Activated CD4-positive, alpha-beta memory T cell treated with anti-CD3 and anti-CD28 coated beads for 36 hours (primary cell): ENCODE measurements at regions of chr2 and their contacts with region 1.

Region 1: DNA sequence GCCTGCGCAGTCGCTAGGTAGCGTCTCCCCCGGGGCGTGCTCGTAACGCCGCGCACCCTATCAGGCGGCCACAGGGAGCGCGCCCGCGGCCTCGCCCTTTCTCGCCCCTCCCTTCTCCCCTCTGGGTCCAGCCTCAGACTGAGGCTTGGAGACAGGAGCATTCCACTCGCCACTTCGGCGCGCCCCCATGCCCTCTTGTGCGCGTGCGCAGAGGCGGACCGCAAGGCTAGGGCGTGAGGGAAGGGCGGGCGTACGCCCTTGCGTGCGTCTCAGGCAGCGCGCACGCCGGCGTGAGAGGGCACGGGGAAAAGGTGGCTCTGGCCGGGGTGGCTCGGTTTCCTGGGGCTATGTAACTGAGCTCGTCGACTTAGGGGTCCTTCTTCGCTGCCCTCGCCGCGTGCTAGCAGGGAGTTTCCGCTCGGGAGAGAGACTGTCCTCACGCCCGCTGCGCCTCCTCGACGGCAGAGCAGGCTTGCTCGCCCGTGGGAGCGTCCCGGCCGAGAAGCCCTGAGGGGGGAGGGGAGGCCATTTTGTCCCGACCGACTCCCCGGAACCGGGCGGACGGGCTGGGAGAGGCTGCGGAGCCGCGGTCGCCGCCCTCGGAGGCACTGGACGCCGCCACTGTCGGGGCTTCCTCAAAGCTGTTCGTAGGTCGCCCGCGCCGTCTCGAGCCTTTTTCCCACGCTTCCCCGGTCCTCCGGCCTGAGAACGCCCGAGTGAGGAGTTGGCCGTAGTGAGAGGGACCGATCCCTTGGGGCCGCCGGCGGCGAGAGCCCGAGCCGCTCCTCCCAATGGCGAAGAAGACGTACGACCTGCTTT is at the start of gene RAB10:
- DNase-seq: peak; percentile 100
- H3K4me3 Mint-ChIP-seq: peak within 1 kb of the TSS; percentile 96
- H3K27ac Mint-ChIP-seq: peak within 1 kb of the TSS; percentile 91
- H3K4me1 Mint-ChIP-seq: peaks cover 24% of the 10 kb centered on the region
- H3K27me3 Mint-ChIP-seq: no peaks in the 10 kb centered on the region
- total RNA-seq, gene RAB10: 110 to 119 TPM

Region 2: DNA sequence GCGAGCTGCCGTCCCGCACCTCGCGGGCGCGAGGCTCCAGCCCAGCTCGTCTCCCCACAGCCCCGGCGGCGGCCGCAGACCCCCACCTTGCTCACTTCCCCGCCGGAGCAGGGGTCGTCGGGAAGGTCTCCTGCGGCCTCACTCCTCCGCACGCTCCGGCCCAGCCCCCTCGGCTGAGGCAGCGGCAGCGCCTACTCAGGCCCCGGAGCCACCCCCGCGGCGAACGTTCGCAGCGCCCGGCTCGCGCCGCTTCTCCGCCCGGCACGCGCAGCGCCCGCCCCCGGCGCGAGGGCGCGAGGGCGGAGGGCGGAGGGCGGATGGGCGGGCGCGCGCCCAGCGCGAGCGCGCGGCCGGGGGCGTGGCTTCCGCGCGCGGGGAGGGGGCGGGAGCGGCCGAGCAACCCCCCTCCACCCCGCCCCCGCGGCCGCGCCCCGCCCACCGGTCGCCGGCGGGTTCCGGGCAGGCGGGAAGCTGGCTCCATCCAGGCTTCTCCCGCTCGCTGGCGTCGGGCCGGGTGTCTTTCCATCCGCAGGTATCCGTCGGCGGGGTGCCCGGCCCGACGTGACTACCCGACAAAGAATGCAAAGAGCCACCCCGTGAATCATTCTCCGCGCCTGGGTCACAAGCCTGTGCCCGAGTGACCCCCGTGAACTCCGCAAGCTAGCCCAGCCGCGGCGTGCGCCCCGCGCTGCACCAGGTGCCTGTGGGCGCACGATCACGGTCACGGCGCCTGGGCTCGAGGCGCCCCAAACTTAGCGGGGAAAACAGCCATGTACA is 360.5 kb before region 1 on chr2 and contains the start of gene DTNB:
- CTCF ChIA-PET with region 1: no interaction called
- POLR2A ChIA-PET with region 1: interaction called, 3 read pairs
- intact Hi-C with region 1: loop called (anchors 10 kb)
- DNase-seq: peak; percentile 85
- H3K4me3 Mint-ChIP-seq: peak within 1 kb of the TSS; percentile 80
- H3K27ac Mint-ChIP-seq: peak within 1 kb of the TSS; percentile 62
- H3K4me1 Mint-ChIP-seq: peaks cover 27% of the 10 kb centered on the region
- H3K27me3 Mint-ChIP-seq: no peaks in the 10 kb centered on the region
- total RNA-seq, gene DTNB: 20.8 to 25.1 TPM

Region 3: DNA sequence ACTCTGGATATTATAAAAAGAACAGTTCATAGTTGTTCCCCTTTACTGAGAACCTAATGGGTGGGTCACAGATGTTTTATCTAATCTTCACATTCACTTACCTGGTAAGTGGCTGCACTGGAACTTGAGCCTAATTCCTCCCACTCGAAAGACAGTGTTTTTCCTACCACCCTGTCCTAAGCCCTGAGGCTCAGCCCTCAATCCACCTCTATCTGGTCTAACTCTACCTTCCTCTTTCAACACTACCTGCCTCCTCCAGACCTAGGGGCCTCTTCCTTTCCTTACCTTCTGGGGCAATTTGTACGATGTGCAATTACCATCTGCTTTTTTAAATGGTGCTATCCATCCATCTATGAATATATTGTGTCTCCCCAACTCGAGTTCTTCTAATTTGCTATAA is 42.1 kb before region 1 on chr2:
- CTCF ChIA-PET with region 1: interaction called, 18 read pairs
- POLR2A ChIA-PET with region 1: no interaction called
- intact Hi-C with region 1: loop called (anchors 2 kb)
- DNase-seq: no peak
- H3K4me3 Mint-ChIP-seq: no peak overlapping the region
- H3K27ac Mint-ChIP-seq: no peak overlapping the region
- H3K4me1 Mint-ChIP-seq: peaks cover 2% of the 10 kb centered on the region
- H3K27me3 Mint-ChIP-seq: no peaks in the 10 kb centered on the region

Region 4: DNA sequence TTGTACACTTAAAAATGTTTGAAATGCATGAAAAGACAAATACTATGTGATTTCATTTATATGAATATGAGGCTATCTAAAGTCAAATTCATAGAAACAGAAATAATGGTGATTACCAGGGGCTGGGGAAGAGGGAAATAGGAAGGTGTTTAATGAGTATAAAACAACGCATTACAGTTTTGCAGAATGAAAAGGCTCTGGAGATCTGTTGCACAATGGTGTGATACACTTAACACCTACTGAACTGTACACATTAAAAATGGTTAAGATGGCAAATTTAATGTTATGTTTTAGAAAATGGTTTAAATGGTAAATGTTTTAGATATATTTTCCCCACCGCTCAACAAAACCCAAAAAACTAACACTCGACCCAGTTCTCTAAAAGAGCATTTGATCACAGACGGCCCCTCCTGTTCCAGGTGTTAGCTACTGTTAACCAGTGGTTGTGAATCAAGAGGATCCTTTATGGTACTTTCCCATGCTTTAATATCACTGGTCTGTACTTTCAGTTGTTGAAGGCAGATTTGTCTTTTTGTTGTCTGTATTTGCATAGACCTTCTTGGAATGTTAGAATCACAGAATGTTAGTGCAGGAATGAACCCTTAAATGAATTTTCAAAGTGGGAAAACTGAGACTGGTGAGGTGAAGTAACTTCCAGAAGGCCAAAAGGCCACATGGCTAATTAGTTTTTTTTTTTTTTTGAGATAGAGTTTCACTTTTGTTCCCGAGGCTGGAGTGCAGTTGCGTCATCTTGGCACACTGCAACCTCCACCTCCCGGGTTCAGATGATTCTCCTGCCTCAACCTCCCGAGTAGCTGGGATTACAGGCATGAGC is 10.1 kb after region 1 on chr2:
- CTCF ChIA-PET with region 1: no interaction called
- POLR2A ChIA-PET with region 1: interaction called, 5 read pairs
- intact Hi-C with region 1: loop called (anchors 1 kb)
- DNase-seq: peak; percentile 24
- H3K4me3 Mint-ChIP-seq: peak overlapping the region; percentile 24
- H3K27ac Mint-ChIP-seq: no peak overlapping the region
- H3K4me1 Mint-ChIP-seq: peaks cover 59% of the 10 kb centered on the region
- H3K27me3 Mint-ChIP-seq: no peaks in the 10 kb centered on the region

Region 5: DNA sequence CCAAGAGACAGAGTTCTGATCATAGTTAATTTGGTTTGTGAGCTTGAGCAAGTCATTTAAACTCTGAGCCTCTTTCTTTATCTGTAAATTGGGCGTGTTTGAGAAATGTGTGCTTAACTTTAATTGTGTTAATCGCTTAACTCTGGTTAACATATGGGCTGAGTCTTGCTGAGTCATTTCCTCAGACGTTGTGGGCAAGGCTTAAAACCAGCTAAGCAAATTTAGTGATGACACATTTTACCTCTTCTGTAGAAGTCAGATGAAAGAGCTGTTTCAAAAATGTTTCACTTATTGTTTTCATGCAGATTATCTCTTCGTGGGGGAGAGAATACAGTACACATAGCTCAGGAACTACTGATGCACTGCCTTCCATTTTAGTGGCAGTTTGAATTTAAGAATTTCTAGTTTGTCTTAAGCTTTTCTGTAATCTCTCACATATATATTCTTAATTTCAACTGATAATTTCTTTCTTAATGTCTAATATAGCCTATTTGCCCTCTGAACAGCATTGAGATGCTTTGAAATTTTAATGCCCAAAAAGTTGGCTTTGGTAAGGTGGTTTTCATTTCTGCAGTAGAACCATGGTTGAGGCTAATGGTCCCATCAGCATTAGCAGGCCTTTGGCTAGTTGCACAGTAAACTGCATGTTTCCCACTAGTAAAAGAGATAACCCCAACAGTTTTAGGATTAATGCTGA is 34.7 kb after region 1 on chr2:
- CTCF ChIA-PET with region 1: interaction called, 4 read pairs
- POLR2A ChIA-PET with region 1: interaction called, 10 read pairs
- intact Hi-C with region 1: loop called (anchors 1 kb)
- DNase-seq: peak; percentile 76
- H3K4me3 Mint-ChIP-seq: peak overlapping the region; percentile 69
- H3K27ac Mint-ChIP-seq: peak overlapping the region; percentile 96
- H3K4me1 Mint-ChIP-seq: peaks cover 57% of the 10 kb centered on the region
- H3K27me3 Mint-ChIP-seq: no peaks in the 10 kb centered on the region

Region 6: GRCh38 chr2:26244309-26245121 is 210.5 kb after region 1 on chr2 and contains the starts of genes HADHA and HADHB:
- CTCF ChIA-PET with region 1: no interaction called
- POLR2A ChIA-PET with region 1: no interaction called
- intact Hi-C with region 1: loop called (anchors 10 kb)
- DNase-seq: peak; percentile 90
- H3K4me3 Mint-ChIP-seq: peak within 1 kb of the TSS; percentile 98
- H3K27ac Mint-ChIP-seq: peak within 1 kb of the TSS; percentile 95
- H3K4me1 Mint-ChIP-seq: peaks cover 48% of the 10 kb centered on the region
- H3K27me3 Mint-ChIP-seq: no peaks in the 10 kb centered on the region
- total RNA-seq, gene HADHA: 129 to 130 TPM
- total RNA-seq, gene HADHB: 73.8 to 78.1 TPM